Mammary epithelial cell (primary cell): ENCODE measurements at regions of chr17 and their contacts with region 1.

Region 1: GRCh38 chr17:68457539-68458259 is 403 bp upstream of the WIPI1 start:
- DNase-seq: peak; percentile 99
- H3K4me3 ChIP-seq: peak overlapping the region; percentile 47 to 50 (median 48)
- H3K27ac ChIP-seq: peak overlapping the region; percentile 56
- H3K4me1 ChIP-seq: peaks cover 34% of the 10 kb centered on the region
- H3K27me3 ChIP-seq: no peaks in the 10 kb centered on the region
- CTCF ChIP-seq: no peak

Region 2: GRCh38 chr17:67891581-67892054 is 566.1 kb before region 1 on chr17:
- CTCF ChIA-PET with region 1: no interaction called
- dilution Hi-C with region 1: no loop called
- in situ Hi-C with region 1: no loop called
- intact Hi-C with region 1: loop called (anchors 10 kb)
- DNase-seq: peak; percentile 5
- H3K4me3 ChIP-seq: no peak overlapping the region
- H3K27ac ChIP-seq: no peak overlapping the region
- H3K4me1 ChIP-seq: no peaks in the 10 kb centered on the region
- H3K27me3 ChIP-seq: no peaks in the 10 kb centered on the region
- CTCF ChIP-seq: peak; percentile 8 to 29

Region 3: GRCh38 chr17:68035523-68036303 is 422.0 kb before region 1 on chr17 and contains the start of gene KPNA2:
- CTCF ChIA-PET with region 1: no interaction called
- dilution Hi-C with region 1: no loop called
- in situ Hi-C with region 1: no loop called
- intact Hi-C with region 1: loop called (anchors 5 kb)
- DNase-seq: peak; percentile 97
- H3K4me3 ChIP-seq: peak within 1 kb of the TSS; percentile 89 to 100 (median 93)
- H3K27ac ChIP-seq: peak within 1 kb of the TSS; percentile 84
- H3K4me1 ChIP-seq: peaks cover 6% of the 10 kb centered on the region
- H3K27me3 ChIP-seq: no peaks in the 10 kb centered on the region
- CTCF ChIP-seq: no peak
- total RNA-seq, gene KPNA2: 63.7 to 168 TPM

Region 4: GRCh38 chr17:68255731-68256538 is 201.8 kb before region 1 on chr17:
- CTCF ChIA-PET with region 1: no interaction called
- dilution Hi-C with region 1: no loop called
- in situ Hi-C with region 1: loop called (anchors 10 kb)
- intact Hi-C with region 1: no loop called
- DNase-seq: no peak
- H3K4me3 ChIP-seq: no peak overlapping the region
- H3K27ac ChIP-seq: no peak overlapping the region
- H3K4me1 ChIP-seq: no peaks in the 10 kb centered on the region
- H3K27me3 ChIP-seq: no peaks in the 10 kb centered on the region
- CTCF ChIP-seq: no peak

Region 5: DNA sequence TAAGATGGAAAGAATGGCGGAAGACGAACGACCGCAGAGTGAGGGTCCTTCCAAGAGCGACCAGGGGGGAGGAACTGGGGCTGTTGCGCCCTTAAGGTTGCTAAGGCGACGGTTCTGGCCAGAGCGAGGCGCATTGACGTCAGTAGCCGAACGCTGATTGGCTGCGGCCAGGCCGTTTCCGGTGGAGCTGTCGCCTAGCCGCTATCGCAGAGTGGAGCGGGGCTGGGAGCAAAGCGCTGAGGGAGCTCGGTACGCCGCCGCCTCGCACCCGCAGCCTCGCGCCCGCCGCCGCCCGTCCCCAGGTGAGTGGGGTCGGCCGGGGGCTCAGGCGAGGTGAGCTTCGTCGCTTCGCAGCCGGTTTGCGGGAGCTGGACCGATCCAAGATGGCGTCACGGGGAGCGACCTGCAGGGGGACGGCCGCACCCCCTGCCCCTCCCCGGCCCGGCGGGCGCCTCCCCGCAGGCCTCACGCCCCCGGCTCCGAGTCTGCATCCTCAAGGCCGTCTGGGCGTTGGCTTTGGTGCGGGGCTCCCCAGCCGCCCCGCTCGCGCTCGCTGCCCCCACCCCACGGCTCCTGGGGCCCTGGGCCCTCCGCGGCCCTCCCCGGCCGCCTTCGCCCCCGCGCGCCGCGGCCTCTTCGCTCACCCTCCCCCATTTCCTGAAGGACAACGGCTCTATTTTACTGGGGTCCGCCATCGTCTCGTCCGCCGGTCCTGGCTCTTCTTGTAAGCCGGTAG is 54.7 kb after region 1 on chr17 and contains the start of gene PRKAR1A:
- CTCF ChIA-PET with region 1: no interaction called
- dilution Hi-C with region 1: no loop called
- in situ Hi-C with region 1: no loop called
- intact Hi-C with region 1: loop called (anchors 2 kb)
- DNase-seq: peak; percentile 93
- H3K4me3 ChIP-seq: peak within 1 kb of the TSS; percentile 79 to 91 (median 88)
- H3K27ac ChIP-seq: peak within 1 kb of the TSS; percentile 95
- H3K4me1 ChIP-seq: peaks cover 33% of the 10 kb centered on the region
- H3K27me3 ChIP-seq: no peaks in the 10 kb centered on the region
- CTCF ChIP-seq: peak in 1 of 2 donors; percentile 9
- total RNA-seq, gene PRKAR1A: 253 to 261 TPM